IMR-90 (cell line): ENCODE measurements at regions of chr12 and their contacts with region 1.

Region 1: DNA sequence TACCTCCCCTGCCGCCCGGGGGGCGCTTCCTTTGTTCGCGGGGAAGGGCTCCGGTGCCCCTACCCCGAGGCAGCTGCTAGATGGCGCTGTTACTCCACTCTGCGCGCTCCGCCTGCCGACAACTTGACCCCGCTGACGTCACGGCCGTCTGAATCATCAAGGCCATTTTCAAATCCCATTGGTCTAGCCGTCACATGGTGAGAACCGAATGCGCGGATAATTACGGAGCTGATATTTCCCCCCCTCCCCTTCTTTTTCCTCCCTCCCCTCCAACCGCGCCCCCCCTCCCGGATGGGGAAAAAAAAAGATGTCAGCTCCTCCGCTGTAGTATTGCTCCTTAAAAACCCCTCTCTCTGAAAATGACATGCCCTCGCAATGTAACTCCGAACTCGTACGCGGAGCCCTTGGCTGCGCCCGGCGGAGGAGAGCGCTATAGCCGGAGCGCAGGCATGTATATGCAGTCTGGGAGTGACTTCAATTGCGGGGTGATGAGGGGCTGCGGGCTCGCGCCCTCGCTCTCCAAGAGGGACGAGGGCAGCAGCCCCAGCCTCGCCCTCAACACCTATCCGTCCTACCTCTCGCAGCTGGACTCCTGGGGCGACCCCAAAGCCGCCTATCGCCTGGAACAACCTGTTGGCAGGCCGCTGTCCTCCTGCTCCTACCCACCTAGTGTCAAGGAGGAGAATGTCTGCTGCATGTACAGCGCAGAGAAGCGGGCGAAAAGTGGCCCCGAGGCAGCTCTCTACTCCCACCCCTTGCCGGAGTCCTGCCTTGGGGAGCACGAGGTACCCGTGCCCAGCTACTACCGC is at the start of gene HOXC10:
- DNase-seq: peak; percentile 75
- ATAC-seq: 0 out of 2 replicates have a peak, but pooled peaks have one; percentile 27
- H3K4me3 ChIP-seq: no peak within 1 kb of the TSS
- H3K27ac ChIP-seq: no peak within 1 kb of the TSS
- H3K4me1 ChIP-seq: 0 out of 2 replicates have a peak, but pooled peaks cover 2% of the 10 kb centered on the region
- H3K27me3 ChIP-seq: peaks cover 94% of the 10 kb centered on the region
- CTCF ChIP-seq: peak; percentile 61
- POLR2A ChIP-seq: no peak
- RAD21 ChIP-seq: peak; percentile 64
- total RNA-seq, gene HOXC10: not detected in 2 replicates

Region 2: DNA sequence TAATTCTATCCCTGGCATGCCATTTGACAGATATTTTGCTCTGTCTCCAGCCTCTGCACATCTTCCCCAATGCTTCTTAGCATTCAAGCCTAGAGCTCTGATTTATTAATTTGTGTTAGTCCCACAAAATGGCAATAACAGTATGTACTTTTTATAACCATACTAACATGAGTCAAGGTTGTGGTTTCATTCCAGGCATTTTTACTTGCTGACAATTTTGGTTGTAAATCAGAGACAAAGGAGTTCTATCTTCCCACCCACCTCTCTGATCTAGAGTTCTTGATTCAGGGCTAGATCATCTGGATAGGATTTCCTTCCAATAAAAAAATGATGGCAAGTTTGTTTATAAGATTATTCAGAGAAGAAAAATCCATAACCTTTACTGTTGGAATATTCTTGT is 214.8 kb before region 1 on chr12:
- CTCF ChIA-PET with region 1: no interaction called
- POLR2A ChIA-PET with region 1: no interaction called
- dilution Hi-C with region 1: no loop called
- in situ Hi-C with region 1: loop called (anchors 10 kb)
- intact Hi-C with region 1: loop called (anchors 5 kb)
- DNase-seq: peak; percentile 97
- ATAC-seq: peak; percentile 84
- H3K4me3 ChIP-seq: no peak overlapping the region
- H3K27ac ChIP-seq: no peak overlapping the region
- H3K4me1 ChIP-seq: peaks cover 13% of the 10 kb centered on the region
- H3K27me3 ChIP-seq: no peaks in the 10 kb centered on the region
- CTCF ChIP-seq: no peak
- POLR2A ChIP-seq: no peak
- RAD21 ChIP-seq: no peak

Region 3: GRCh38 chr12:53869500-53869899 is 115.6 kb before region 1 on chr12:
- CTCF ChIA-PET with region 1: no interaction called
- POLR2A ChIA-PET with region 1: no interaction called
- dilution Hi-C with region 1: no loop called
- in situ Hi-C with region 1: no loop called
- intact Hi-C with region 1: no loop called
- DNase-seq: no peak
- ATAC-seq: no peak
- H3K4me3 ChIP-seq: no peak overlapping the region
- H3K27ac ChIP-seq: no peak overlapping the region
- H3K4me1 ChIP-seq: no peaks in the 10 kb centered on the region
- H3K27me3 ChIP-seq: peaks cover 7% of the 10 kb centered on the region
- CTCF ChIP-seq: no peak
- POLR2A ChIP-seq: no peak
- RAD21 ChIP-seq: no peak

Region 4: DNA sequence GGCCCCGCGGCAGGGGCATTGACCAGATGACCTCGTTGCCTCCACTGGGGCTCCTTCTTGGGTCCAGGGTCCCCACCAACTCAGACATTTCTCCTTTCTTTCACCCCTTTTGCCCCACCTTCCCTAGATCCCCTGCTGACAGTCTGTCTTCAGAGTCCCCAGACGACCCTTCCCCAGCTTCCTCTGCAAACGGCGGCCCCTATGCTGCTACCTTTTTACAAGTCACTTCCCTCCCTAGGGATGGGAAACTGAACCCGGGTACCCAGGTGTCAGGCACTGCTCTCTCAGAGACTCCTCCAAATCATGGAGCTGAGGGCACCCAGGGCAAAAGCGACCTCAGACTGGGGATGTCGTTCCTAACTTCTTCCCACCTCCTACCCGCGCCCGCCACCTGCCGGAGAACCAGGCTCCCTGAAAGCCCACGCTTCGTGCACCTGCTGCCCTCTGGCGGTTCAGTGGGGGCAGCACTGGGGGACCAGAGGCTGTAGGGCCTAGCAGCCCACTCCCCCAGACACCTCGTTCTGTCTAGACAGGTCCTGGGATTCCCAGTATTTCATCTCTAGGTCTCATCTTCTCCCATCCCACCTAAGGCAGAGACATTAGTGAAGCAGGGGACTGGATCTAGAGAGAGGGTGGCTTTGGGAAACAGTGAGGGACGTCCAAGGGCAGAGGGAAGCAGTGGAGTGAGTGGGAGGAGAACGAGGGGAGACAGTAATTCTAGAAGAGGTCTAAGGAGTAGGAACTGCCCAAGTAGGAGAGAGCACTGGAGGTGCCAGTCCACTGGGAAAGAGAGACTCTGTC is 394.5 kb after region 1 on chr12:
- CTCF ChIA-PET with region 1: no interaction called
- POLR2A ChIA-PET with region 1: no interaction called
- dilution Hi-C with region 1: no loop called
- in situ Hi-C with region 1: loop called (anchors 10 kb)
- intact Hi-C with region 1: no loop called
- DNase-seq: peak; percentile 73
- ATAC-seq: peak; percentile 76
- H3K4me3 ChIP-seq: peak overlapping the region; percentile 57
- H3K27ac ChIP-seq: no peak overlapping the region
- H3K4me1 ChIP-seq: peaks cover 9% of the 10 kb centered on the region
- H3K27me3 ChIP-seq: no peaks in the 10 kb centered on the region
- CTCF ChIP-seq: peak; percentile 100; the same call in 1 of the 2 replicates
- POLR2A ChIP-seq: no peak
- RAD21 ChIP-seq: peak; percentile 91